Esophagus muscularis mucosa (tissue), 4 donors: ENCODE measurements at regions of chrX and their contacts with region 1.

Region 1: GRCh38 chrX:30275498-30275897 is 28.6 kb downstream of the MAGEB1 start:
- DNase-seq: no peak
- H3K4me3 ChIP-seq: no peak overlapping the region
- H3K27ac ChIP-seq: no peak overlapping the region
- H3K4me1 ChIP-seq: no peaks in the 10 kb centered on the region
- H3K27me3 ChIP-seq: no peaks in the 10 kb centered on the region
- CTCF ChIP-seq: peak in 2 of 3 experiments; percentile 19 to 24
- EP300 ChIP-seq: no peak
- POLR2A ChIP-seq: no peak

Region 2: GRCh38 chrX:29890646-29891200 is 384.8 kb before region 1 on chrX:
- intact Hi-C with region 1: no loop called
- DNase-seq: no peak
- H3K4me3 ChIP-seq: no peak overlapping the region
- H3K27ac ChIP-seq: no peak overlapping the region
- H3K4me1 ChIP-seq: no peaks in the 10 kb centered on the region
- H3K27me3 ChIP-seq: no peaks in the 10 kb centered on the region
- CTCF ChIP-seq: no peak
- EP300 ChIP-seq: no peak
- POLR2A ChIP-seq: no peak

Region 3: GRCh38 chrX:30196322-30196721 is 79.2 kb before region 1 on chrX:
- intact Hi-C with region 1: no loop called
- DNase-seq: no peak
- H3K4me3 ChIP-seq: no peak overlapping the region
- H3K27ac ChIP-seq: no peak overlapping the region
- H3K4me1 ChIP-seq: no peaks in the 10 kb centered on the region
- H3K27me3 ChIP-seq: peaks cover 0 to 4% (median 0%) of the 10 kb centered on the region in 4 donors
- CTCF ChIP-seq: no peak
- EP300 ChIP-seq: no peak
- POLR2A ChIP-seq: no peak

Region 4: DNA sequence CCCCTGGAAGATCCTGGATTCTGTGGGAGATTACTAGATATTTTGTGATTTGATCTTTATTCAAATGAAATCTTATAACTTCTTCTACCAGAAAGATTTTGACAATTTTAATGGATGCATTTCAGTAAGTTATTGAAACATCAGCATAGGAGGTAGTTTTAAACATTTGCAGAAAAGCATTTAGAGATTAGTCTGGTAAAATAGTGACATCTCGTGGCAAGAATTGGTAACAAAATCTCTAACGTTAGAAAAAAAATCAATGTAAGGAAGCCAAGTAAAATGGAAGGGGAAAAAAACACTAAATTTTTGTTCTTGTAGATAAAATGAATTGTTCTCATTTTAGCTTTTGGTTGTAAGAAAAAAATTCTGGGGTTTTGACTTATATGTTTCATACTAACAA is 228.8 kb after region 1 on chrX:
- intact Hi-C with region 1: loop called (anchors 10 kb)
- DNase-seq: no peak
- H3K4me3 ChIP-seq: no peak overlapping the region
- H3K27ac ChIP-seq: no peak overlapping the region
- H3K4me1 ChIP-seq: no peaks in the 10 kb centered on the region
- H3K27me3 ChIP-seq: no peaks in the 10 kb centered on the region
- CTCF ChIP-seq: peak; percentile 42 to 54 (median 42)
- EP300 ChIP-seq: no peak
- POLR2A ChIP-seq: no peak